Heart left ventricle (tissue), 16 donors: ENCODE measurements at regions of chr10 and their contacts with region 1.

Region 1: DNA sequence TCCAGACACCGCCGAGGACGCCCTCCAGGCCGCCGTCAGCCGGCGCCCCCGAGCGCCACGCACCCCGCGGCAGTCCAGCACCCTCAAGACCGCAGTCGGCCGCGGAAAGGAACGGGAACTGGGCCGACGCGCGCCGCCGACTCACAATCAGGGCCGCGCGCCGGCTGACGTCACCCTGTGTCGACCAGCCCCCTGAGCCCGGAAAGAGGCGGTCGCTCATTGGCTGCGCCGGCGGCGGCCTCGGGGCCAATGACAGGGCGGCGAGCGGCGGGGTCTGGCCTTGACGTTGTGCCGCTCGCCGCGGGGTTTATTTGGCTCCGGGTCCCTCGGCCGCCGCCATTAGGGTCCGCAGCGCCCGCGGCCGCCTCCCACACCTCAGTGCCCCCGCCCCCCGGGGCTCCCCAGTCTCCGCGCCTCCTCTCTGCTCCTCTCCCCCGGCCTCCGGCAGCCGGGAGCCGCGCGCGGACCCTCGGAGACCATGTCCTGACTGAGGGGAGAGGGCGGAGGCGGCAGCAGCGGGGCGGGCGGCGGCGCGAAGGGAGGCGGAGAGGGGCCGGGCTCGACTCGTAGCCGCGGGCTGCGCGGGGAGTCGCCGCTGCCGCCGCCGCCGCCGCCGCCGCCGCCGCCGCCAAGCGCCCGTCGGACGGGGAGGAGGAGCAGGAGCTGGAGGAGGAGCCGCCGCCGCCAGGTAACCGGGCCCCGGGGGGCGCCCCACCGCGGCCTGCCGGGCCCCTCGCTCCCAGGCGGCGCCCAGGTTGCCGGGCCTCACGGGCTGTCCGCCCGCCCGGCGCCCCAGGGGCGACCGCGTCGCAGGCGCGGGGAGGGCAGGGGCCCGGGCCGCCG is 25.1 kb upstream of the ZRANB1 start:
- DNase-seq: peak; percentile 99 to 100 (median 99)
- ATAC-seq: peak; percentile 98 to 99 (median 98)
- H3K4me3 ChIP-seq: peak overlapping the region; percentile 80 to 97 (median 88)
- H3K27ac ChIP-seq: peak overlapping the region; percentile 92 to 99 (median 96)
- H3K4me1 ChIP-seq: peaks cover 5 to 52% (median 40%) of the 10 kb centered on the region in 12 donors
- H3K27me3 ChIP-seq: no peaks in the 10 kb centered on the region
- CTCF ChIP-seq: peak in 1 of 12 donors; percentile 5
- POLR2A ChIP-seq: peak; percentile 85 to 98

Region 2: DNA sequence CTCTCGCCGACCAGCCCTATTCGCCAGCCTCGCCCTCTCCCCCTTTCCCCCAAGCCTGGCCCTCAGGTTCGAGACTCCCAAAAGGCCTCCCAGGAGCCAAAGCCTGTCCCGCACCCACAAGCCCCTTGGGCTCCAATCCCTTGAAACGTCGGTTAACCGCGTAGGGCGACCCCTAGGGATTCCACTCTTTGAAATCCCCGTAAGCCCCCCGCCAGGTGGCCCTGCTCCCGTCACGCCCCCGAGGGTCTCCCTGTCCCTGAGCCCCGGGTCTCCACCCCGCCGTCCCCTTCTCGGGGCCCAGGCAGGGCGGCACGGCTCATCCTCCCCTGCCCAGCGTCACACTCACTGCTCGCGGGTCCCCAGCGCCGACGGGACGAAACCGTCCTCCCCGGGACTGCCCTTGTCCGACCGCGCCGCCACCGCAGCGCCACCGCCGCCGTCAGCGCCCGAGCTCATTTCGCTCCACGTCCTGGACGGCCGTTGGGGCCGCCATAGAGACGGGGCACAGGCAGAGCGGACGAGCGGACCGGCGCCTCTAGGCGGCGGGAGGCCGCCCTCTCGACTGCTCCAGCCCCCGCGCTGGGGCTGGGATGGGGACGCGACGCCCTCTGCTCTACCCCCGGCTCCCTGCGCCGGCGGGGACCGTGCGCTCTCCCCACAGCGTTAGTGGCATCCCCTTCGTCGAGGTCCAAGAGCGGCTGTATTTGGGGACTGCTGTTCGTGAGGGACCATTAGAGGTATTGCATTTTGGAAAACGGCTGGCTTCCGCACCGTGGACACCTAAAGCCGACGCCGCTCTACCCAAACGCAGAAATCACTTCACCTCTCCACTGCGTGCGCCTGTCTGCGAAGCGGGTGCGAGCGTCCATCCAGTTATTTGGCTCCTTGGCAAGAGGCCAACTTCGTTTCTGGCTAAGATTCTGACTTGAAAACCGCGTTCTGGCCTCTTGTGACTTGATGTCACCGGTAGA is 125.1 kb before region 1 on chr10 and contains the start of gene EEF1AKMT2:
- intact Hi-C with region 1: loop called in 1 of 10 experiments (anchors 10 kb)
- DNase-seq: peak; percentile 81 to 93 (median 88)
- ATAC-seq: peak; percentile 90 to 99 (median 98)
- H3K4me3 ChIP-seq: peak within 1 kb of the TSS; percentile 80 to 100 (median 98)
- H3K27ac ChIP-seq: peak within 1 kb of the TSS; percentile 56 to 96 (median 93)
- H3K4me1 ChIP-seq: peaks cover 0 to 18% (median 7%) of the 10 kb centered on the region in 12 donors
- H3K27me3 ChIP-seq: no peaks in the 10 kb centered on the region
- CTCF ChIP-seq: peak in 11 of 12 donors; percentile 13 to 66 (median 38)
- POLR2A ChIP-seq: peak in 1 of 2 donors; percentile 59
- total RNA-seq, gene EEF1AKMT2: 3.6 to 14.8 (median 11.6) TPM

Region 3: DNA sequence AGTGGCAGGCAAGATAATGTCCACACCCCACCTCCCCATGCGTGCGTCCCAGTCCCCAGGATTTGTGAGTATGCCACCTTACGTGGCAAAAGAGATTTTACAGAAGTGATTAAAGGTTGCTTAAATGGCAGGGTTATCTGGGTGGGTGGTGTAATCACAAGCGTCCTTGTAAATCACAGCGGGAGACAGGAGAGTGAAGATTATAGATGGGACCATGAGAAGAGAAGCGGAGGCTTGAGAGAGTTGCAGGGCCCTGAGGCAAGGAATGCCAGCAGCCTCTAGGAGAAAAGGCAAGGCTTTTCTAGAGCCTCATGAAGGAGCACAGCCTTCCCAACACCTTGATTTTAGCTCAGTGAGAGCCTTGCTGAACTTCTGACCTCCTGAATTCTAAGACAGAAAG is 35.3 kb after region 1 on chr10:
- intact Hi-C with region 1: loop called in 1 of 10 experiments (anchors 5 kb)
- DNase-seq: no peak
- ATAC-seq: no peak
- H3K4me3 ChIP-seq: no peak overlapping the region
- H3K27ac ChIP-seq: no peak overlapping the region
- H3K4me1 ChIP-seq: peaks cover 0 to 60% (median 30%) of the 10 kb centered on the region in 12 donors
- H3K27me3 ChIP-seq: no peaks in the 10 kb centered on the region
- CTCF ChIP-seq: no peak
- POLR2A ChIP-seq: no peak

Region 4: GRCh38 chr10:124975977-124976514 is 59.2 kb after region 1 on chr10:
- intact Hi-C with region 1: loop called in 1 of 10 experiments (anchors 5 kb)
- DNase-seq: no peak
- ATAC-seq: peak in 1 of 4 donors; percentile 49
- H3K4me3 ChIP-seq: no peak overlapping the region
- H3K27ac ChIP-seq: no peak overlapping the region
- H3K4me1 ChIP-seq: peaks cover 0 to 23% (median 13%) of the 10 kb centered on the region in 12 donors
- H3K27me3 ChIP-seq: no peaks in the 10 kb centered on the region
- CTCF ChIP-seq: no peak
- POLR2A ChIP-seq: no peak

Region 5: DNA sequence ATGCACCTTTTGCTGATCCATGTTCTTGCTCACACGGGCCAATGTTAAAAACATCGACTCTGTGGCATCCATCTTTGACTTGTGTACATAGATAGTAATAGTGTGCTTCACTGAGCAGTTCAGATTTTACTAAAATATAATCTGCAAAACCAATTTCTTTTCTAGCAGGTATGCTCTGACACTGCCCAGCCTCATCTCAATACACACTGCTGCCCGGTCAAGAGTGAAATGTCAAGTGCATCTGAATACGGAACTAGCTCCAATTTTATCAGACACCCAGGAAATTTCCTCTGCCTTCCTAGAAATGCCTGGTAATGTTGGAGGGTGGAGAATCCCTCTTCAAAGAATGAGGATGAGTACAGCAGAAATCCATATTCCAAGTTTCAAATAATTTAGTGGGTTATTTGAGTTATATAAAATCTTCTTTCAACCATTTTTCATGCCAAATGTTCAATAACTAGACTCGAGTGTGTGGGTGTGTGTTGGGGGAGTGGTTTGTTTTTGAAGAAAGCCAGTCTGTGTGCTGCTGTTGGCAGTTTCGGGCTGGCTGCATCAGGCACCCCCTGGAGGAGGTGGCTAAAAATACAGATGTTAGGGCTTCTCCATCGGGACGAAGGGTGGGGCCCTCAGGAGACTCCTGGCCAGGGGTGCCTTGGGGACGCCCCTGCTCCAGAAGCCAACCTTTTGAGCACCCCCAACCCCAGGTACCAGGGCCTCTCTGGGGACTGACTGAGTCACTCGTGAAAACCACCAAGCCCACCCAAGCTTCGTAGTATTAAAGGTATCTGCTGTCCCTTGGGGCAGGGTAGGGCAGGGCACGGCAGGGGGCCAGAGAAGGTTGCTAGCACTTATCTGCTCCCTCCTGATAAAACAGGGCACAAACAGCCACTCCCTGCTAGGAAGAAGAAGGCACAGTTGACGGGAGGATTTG is 228.2 kb after region 1 on chr10:
- intact Hi-C with region 1: loop called in 2 of 10 experiments (anchors 10 kb)
- DNase-seq: peak in 2 of 5 donors; percentile 62 to 65
- ATAC-seq: peak; percentile 48 to 65 (median 58)
- H3K4me3 ChIP-seq: peak overlapping the region in 5 of 12 donors; percentile 11 to 30 (median 18)
- H3K27ac ChIP-seq: peak overlapping the region in 10 of 12 donors; percentile 8 to 68 (median 42)
- H3K4me1 ChIP-seq: peaks cover 21 to 91% (median 71%) of the 10 kb centered on the region in 12 donors
- H3K27me3 ChIP-seq: no peaks in the 10 kb centered on the region
- CTCF ChIP-seq: peak; percentile 17 to 61 (median 46)
- POLR2A ChIP-seq: no peak

Region 6: DNA sequence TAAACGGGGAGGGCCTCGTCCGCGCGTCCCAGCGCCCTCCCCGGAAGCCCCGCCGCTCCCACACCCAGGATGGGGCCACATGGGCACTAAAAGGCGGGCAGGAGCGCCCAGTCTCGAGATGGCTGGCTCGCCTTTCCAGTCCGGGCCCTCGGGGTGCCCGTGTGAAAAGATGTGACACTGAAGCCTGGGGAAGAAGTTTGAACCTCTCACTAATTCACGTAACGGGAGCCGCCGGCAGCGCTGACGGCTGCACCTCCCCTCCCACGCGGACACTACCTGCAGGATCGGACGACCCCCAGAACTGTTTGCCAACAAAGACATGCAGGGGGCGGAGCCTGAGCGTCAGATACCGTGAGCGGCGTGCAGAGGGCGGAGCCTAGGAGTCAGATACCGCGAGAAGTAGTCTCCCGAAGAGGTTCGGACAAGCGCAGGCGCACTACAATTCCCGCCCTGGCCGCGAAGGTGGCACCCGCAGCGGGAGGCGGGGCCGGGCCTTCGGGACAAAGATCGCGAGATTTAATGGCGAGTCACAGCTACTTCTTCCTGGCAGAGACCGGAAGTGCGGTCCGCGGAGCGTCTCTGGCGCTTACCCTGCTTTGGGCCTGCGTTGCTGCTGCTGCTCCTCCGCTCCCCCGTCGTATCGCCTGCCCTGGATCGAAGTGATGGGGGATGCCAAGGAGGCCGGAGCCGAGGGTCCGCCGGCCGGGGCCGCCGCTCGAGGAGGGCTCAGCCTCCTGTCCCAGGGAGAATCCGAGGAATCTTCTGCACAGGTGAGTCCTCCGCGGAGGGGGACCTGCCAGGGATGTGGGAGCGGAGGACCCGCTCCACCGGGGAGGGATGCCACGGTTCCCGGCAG is 802.6 kb after region 1 on chr10 and contains the start of gene EDRF1:
- intact Hi-C with region 1: loop called in 1 of 10 experiments (anchors 10 kb)
- DNase-seq: peak; percentile 99 to 100 (median 99)
- ATAC-seq: peak; percentile 100
- H3K4me3 ChIP-seq: peak within 1 kb of the TSS; percentile 76 to 99 (median 95)
- H3K27ac ChIP-seq: peak within 1 kb of the TSS; percentile 54 to 93 (median 86)
- H3K4me1 ChIP-seq: peaks cover 3 to 24% (median 13%) of the 10 kb centered on the region in 12 donors
- H3K27me3 ChIP-seq: no peaks in the 10 kb centered on the region
- CTCF ChIP-seq: no peak
- POLR2A ChIP-seq: peak in 1 of 2 donors; percentile 89
- total RNA-seq, gene EDRF1: 6.9 to 13.9 (median 9.8) TPM

Region 7: DNA sequence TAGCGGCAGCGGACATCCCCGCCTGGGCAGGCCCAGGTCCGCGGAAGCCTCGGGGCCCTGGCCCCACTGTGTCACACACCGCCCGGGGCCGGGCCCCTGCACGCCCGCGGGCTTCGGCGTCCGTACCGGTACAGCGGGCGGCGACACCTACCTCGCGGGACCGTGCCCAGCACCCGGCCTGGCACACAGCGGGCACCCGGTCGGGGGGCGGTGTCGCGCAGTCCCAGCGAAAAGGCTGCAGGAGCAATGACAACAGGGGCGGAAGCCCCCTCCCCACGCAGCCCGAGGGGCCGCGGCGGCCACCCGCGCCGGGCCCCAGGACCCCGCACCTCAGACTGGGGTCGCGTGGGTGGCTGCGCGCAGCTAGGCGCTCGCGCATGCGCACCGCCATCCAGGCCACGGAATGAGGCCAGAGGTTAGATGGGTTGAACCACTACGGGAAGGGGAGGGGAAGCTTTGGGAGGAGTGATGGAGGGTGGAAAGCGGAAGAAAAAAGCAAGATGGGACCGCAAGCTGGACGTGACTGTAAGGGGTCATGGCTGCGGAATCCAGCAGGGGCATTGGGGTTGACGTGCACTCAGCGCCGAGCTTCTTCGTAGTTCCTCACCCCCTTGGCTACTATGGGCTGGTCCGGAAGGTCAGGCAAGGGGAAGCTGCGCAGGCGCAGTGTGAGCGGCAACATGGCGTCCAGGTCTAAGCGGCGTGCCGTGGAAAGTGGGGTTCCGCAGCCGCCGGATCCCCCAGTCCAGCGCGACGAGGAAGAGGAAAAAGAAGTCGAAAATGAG is 906.3 kb after region 1 on chr10 and contains the starts of genes BCCIP and UROS:
- intact Hi-C with region 1: loop called in 1 of 10 experiments (anchors 5 kb)
- DNase-seq: peak; percentile 91 to 97 (median 92)
- ATAC-seq: peak; percentile 85 to 96 (median 94)
- H3K4me3 ChIP-seq: peak within 1 kb of the TSS; percentile 71 to 99 (median 95)
- H3K27ac ChIP-seq: peak within 1 kb of the TSS; percentile 83 to 97 (median 90)
- H3K4me1 ChIP-seq: peaks cover 6 to 44% (median 32%) of the 10 kb centered on the region in 12 donors
- H3K27me3 ChIP-seq: no peaks in the 10 kb centered on the region
- CTCF ChIP-seq: peak in 2 of 12 donors; percentile 11 to 18
- POLR2A ChIP-seq: peak in 1 of 2 donors; percentile 52
- total RNA-seq, gene BCCIP: 31.3 to 62.2 (median 44.4) TPM
- total RNA-seq, gene UROS: 50.5 to 81.4 (median 68.5) TPM